Activated CD4-positive, alpha-beta T cell treated with anti-CD3 and anti-CD28 coated beads, Interleukin-2, amount 10 ng/mL, durations not matched to agents 7 days and 5 days (primary cell): ENCODE measurements at regions of chr15 and their contacts with region 1.

Region 1: DNA sequence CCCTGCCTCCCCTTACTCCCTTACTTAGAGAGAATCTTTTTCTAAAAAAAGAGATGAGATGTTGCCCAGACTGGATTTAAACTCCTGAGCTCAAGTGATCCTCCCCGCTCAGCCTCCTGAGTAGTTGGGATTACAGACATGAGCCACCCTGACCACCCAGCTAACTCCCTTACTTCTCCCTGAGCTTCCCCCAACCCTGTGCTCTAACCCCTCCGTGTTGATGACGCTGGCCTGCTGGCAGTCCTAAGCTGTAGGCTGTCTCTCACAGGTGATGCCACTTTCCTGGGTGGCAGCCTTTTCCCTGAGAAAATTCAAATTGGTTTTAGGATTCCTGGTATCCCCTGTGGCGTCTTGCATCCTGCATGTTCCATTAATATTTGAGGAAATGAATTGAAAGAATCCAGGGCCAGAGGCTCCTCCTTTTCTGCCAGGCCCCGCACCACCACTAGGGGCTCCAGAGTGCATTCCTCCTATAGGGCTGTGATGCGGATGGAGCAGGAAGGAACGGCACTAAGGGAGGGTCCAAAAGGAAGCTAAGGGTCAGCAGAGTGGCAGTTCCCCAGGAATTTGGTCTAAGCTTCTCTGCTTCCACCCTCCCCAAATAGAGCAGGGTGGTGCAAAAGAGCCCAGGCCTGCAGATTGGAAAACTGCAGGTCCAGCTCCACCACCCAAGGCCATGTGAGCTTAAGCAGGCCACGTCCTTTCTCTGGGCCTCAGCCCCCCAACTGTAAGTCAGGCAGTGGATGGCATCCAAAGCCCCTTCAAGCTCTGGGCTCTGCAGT is 101.1 kb downstream of the DAPK2 start:
- DNase-seq: peak; percentile 72
- H3K4me3 Mint-ChIP-seq: no peak overlapping the region
- H3K27ac Mint-ChIP-seq: peak overlapping the region; percentile 47
- H3K4me1 Mint-ChIP-seq: peaks cover 6% of the 10 kb centered on the region
- H3K27me3 Mint-ChIP-seq: no peaks in the 10 kb centered on the region

Region 2: DNA sequence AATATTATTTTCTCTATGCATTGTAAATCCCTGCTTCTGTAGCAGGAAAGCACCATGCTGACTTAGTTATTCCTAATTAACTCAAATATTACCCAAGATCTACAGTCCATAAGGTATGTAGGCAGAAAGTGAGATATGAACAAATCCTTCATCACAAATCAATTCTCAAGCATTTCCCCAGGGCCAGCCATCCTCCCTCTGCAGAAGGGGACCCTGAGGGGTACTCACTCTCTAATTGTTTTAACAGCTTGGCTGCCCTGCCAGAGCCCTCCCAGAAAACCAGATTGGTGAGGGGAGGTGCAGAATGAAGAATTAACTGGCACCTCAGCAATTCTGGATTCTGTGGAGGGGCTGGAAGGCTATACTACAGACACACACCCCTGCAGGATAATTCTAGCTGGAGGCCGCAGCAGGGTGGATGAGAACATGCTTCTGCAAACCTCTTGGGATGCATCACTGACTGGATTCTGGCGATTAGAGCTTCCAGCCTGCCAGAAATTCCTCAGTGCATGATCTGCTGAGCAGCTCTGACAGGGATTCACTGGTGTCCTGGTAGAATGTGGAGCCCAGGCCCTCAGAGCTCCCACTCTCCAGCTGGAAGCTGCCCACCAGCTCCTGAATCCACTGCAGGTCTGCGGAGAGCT is 22.8 kb before region 1 on chr15:
- CTCF ChIA-PET with region 1: interaction called, 21 read pairs
- POLR2A ChIA-PET with region 1: no interaction called
- DNase-seq: no peak
- H3K4me3 Mint-ChIP-seq: no peak overlapping the region
- H3K27ac Mint-ChIP-seq: no peak overlapping the region
- H3K4me1 Mint-ChIP-seq: peaks cover 17% of the 10 kb centered on the region
- H3K27me3 Mint-ChIP-seq: no peaks in the 10 kb centered on the region

Region 3: DNA sequence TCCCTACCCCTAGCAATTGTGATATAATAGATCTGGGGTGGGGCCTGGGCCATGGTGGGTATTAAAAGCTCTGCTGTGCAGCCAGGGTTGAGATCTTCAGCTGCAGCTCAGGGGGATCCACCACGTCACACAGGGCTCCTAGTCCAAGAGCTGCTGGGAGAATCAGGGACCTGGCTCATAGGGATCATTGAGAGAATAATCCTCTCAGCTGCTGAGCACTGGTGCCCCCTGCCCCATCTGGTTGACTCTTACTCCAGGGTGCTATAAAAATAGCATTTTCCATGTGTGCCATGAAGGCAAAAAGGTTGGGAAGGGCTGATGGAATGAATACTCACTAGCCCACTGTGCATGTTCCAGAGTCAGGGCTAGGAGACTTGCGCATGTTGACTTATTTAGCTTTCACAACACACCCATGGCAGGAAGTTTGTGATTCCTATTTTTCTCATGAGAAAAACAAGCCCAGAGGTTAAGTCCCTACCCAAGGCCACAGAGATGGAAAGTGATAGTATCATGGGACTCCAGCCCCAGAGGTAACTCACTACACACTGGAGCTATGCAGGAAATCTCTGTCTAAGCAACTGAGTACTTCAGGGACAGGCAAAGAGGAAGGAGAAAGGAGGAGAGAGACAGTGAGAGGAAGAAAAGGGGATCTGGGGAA is 16.9 kb before region 1 on chr15:
- CTCF ChIA-PET with region 1: interaction called, 13 read pairs
- POLR2A ChIA-PET with region 1: no interaction called
- DNase-seq: no peak
- H3K4me3 Mint-ChIP-seq: no peak overlapping the region
- H3K27ac Mint-ChIP-seq: no peak overlapping the region
- H3K4me1 Mint-ChIP-seq: no peaks in the 10 kb centered on the region
- H3K27me3 Mint-ChIP-seq: no peaks in the 10 kb centered on the region

Region 4: GRCh38 chr15:64010719-64011118 is 65.5 kb after region 1 on chr15:
- CTCF ChIA-PET with region 1: interaction called, 10 read pairs
- POLR2A ChIA-PET with region 1: no interaction called
- DNase-seq: peak; percentile 92
- H3K4me3 Mint-ChIP-seq: peak overlapping the region; percentile 37
- H3K27ac Mint-ChIP-seq: peak overlapping the region; percentile 93
- H3K4me1 Mint-ChIP-seq: peaks cover 54% of the 10 kb centered on the region
- H3K27me3 Mint-ChIP-seq: no peaks in the 10 kb centered on the region